ENCODE measurements at regions of chr12 and their contacts with region 1.

Region 1: GRCh38 chr12:45183246-45183645 is 32.6 kb upstream of the ANO6 start:
- DNase-seq: no peak
- ATAC-seq: no peak
- H3K4me3 ChIP-seq: no peak overlapping the region
- H3K27ac ChIP-seq: no peak overlapping the region
- H3K4me1 ChIP-seq: peaks cover 0 to 14% (median 0%) of the 10 kb centered on the region in 12 donors
- H3K27me3 ChIP-seq: no peaks in the 10 kb centered on the region
- CTCF ChIP-seq: peak in 11 of 12 donors; percentile 25 to 65 (median 43)
- POLR2A ChIP-seq: no peak

Region 2: DNA sequence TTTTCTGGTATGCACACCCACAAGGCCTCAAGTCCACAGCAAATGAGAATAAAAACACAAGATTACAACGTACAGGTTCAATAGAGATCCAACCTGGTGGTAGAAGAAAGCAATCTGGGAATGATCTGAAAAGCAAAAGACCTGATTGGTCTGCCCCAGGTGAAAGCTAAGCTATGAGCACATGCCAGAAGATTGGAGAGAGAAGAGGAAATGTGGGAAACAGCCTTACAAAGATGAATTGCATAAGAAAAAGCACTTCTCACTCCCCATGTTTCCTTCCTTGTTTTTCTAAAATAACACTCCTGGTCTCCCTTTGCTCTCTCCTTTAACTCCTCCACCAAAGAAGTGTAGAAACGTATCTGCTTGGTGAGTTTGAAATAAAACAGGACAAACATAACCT is 44.6 kb before region 1 on chr12:
- intact Hi-C with region 1: no loop called
- DNase-seq: no peak
- ATAC-seq: no peak
- H3K4me3 ChIP-seq: no peak overlapping the region
- H3K27ac ChIP-seq: no peak overlapping the region
- H3K4me1 ChIP-seq: no peaks in the 10 kb centered on the region
- H3K27me3 ChIP-seq: no peaks in the 10 kb centered on the region
- CTCF ChIP-seq: no peak
- POLR2A ChIP-seq: no peak

Region 3: DNA sequence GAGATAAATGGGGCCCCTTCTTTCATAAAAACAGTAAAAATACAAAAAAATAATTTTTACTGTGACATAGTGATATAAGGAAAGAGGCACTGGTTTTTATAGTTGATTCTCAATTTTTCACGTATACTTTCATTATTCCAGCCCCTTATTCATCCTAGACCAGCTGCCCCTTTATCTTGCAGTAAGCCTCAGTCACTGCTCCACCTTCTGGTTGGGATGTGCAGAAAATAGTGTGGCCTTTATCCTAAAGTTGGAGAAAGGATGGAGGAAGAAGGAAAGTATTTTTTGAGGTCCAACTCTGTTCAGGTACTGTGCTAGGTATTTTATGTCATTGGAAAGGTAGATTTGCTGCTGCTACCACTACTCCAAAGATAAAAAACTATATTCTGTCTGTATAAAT is 205.3 kb after region 1 on chr12:
- intact Hi-C with region 1: loop called in 5 of 10 experiments (anchors 5 to 10 kb)
- DNase-seq: peak in 2 of 5 donors; percentile 22 to 28
- ATAC-seq: peak in 3 of 4 donors; percentile 48 to 71 (median 60)
- H3K4me3 ChIP-seq: no peak overlapping the region
- H3K27ac ChIP-seq: peak overlapping the region in 1 of 12 donors; percentile 40
- H3K4me1 ChIP-seq: peaks cover 0 to 5% (median 0%) of the 10 kb centered on the region in 12 donors
- H3K27me3 ChIP-seq: no peaks in the 10 kb centered on the region
- CTCF ChIP-seq: peak; percentile 37 to 76 (median 60)
- POLR2A ChIP-seq: no peak

Region 4: GRCh38 chr12:46494424-46494823 is 1311.2 kb after region 1 on chr12:
- intact Hi-C with region 1: no loop called
- DNase-seq: no peak
- ATAC-seq: no peak
- H3K4me3 ChIP-seq: no peak overlapping the region
- H3K27ac ChIP-seq: peak overlapping the region in 7 of 12 donors; percentile 9 to 64 (median 21)
- H3K4me1 ChIP-seq: peaks cover 3 to 53% (median 36%) of the 10 kb centered on the region in 12 donors
- H3K27me3 ChIP-seq: no peaks in the 10 kb centered on the region
- CTCF ChIP-seq: no peak
- POLR2A ChIP-seq: no peak